ENCODE measurements at regions of chr12 and their contacts with region 1.

Region 1: GRCh38 chr12:12916135-12916944 is 25.0 kb downstream of the GPRC5A start:
- DNase-seq: peak; percentile 54
- H3K4me3 ChIP-seq: no peak overlapping the region
- H3K27ac ChIP-seq: no peak overlapping the region
- H3K4me1 ChIP-seq: no peaks in the 10 kb centered on the region
- H3K27me3 ChIP-seq: no peaks in the 10 kb centered on the region
- CTCF ChIP-seq: peak; percentile 97 to 99

Region 2: GRCh38 chr12:12983420-12984035 is 67.2 kb after region 1 on chr12:
- CTCF ChIA-PET with region 1: no interaction called
- dilution Hi-C with region 1: no loop called
- in situ Hi-C with region 1: loop called in 1 of 2 experiments (anchors 5 kb)
- intact Hi-C with region 1: loop called (anchors 1 kb)
- DNase-seq: peak; percentile 37
- H3K4me3 ChIP-seq: no peak overlapping the region
- H3K27ac ChIP-seq: no peak overlapping the region
- H3K4me1 ChIP-seq: no peaks in the 10 kb centered on the region
- H3K27me3 ChIP-seq: no peaks in the 10 kb centered on the region
- CTCF ChIP-seq: peak; percentile 55 to 75

Region 3: DNA sequence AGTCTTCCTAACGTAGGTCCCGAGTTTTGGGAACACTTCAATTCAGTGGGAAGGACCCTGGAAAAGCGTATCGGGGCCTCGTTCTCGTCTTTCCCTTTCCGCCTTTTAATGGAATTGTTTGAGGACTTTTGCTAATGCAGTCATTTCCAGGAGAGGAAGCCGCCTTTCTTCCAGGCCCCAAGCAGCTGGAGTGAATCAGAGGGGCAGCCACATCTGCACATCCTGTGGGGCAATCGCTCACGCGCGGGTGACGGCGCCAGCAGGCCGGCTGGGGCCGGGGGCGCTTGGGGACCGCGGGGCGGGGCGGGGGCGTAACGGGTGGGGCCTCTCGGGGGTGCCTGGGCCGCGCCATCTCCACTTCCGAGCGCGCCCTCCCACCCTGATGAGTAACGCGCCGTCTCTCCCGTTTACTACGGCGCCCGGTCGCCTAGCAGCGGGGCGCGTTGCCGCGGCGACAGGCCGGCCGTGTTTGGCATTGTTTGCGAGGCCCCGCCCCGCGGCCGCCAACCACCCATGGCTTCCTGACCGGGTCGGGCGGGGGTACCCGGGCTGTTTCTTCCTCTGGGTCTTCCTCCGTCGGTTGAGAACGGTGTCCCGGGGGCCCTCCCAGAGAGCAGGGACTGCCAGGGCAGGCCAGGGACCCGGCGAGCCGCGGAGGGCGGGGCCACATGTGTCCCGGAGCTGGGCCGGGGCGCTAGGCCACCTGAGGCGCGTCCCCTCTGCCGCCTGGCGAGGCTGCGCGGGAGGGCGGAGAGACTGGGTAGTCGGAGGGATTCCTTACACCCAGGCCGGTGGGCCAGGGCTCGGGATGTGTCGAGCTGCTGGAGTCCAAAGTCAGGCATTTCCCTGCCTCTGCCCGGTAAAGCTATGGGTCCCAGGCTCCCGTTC is 184.8 kb after region 1 on chr12:
- CTCF ChIA-PET with region 1: no interaction called
- dilution Hi-C with region 1: no loop called
- in situ Hi-C with region 1: no loop called
- intact Hi-C with region 1: loop called (anchors 2 kb)
- DNase-seq: peak; percentile 89
- H3K4me3 ChIP-seq: peak overlapping the region; percentile 28 to 47 (median 32)
- H3K27ac ChIP-seq: peak overlapping the region; percentile 100
- H3K4me1 ChIP-seq: peaks cover 54% of the 10 kb centered on the region
- H3K27me3 ChIP-seq: no peaks in the 10 kb centered on the region
- CTCF ChIP-seq: no peak

Region 4: GRCh38 chr12:13223179-13223859 is 307.0 kb after region 1 on chr12:
- CTCF ChIA-PET with region 1: no interaction called
- dilution Hi-C with region 1: no loop called
- in situ Hi-C with region 1: loop called (anchors 10 to 25 kb)
- intact Hi-C with region 1: no loop called
- DNase-seq: peak; percentile 83
- H3K4me3 ChIP-seq: no peak overlapping the region
- H3K27ac ChIP-seq: peak overlapping the region; percentile 75
- H3K4me1 ChIP-seq: peaks cover 29% of the 10 kb centered on the region
- H3K27me3 ChIP-seq: no peaks in the 10 kb centered on the region
- CTCF ChIP-seq: no peak

Region 5: GRCh38 chr12:13278249-13278787 is 362.0 kb after region 1 on chr12:
- CTCF ChIA-PET with region 1: no interaction called
- dilution Hi-C with region 1: no loop called
- in situ Hi-C with region 1: no loop called
- intact Hi-C with region 1: no loop called
- DNase-seq: peak; percentile 45
- H3K4me3 ChIP-seq: no peak overlapping the region
- H3K27ac ChIP-seq: no peak overlapping the region
- H3K4me1 ChIP-seq: no peaks in the 10 kb centered on the region
- H3K27me3 ChIP-seq: peaks cover 2% of the 10 kb centered on the region
- CTCF ChIP-seq: peak; percentile 61 to 96

Measured in mammary epithelial cell (primary cell).